Ascending aorta (tissue), 2 donors: ENCODE measurements at regions of chr17 and their contacts with region 1.

Region 1: DNA sequence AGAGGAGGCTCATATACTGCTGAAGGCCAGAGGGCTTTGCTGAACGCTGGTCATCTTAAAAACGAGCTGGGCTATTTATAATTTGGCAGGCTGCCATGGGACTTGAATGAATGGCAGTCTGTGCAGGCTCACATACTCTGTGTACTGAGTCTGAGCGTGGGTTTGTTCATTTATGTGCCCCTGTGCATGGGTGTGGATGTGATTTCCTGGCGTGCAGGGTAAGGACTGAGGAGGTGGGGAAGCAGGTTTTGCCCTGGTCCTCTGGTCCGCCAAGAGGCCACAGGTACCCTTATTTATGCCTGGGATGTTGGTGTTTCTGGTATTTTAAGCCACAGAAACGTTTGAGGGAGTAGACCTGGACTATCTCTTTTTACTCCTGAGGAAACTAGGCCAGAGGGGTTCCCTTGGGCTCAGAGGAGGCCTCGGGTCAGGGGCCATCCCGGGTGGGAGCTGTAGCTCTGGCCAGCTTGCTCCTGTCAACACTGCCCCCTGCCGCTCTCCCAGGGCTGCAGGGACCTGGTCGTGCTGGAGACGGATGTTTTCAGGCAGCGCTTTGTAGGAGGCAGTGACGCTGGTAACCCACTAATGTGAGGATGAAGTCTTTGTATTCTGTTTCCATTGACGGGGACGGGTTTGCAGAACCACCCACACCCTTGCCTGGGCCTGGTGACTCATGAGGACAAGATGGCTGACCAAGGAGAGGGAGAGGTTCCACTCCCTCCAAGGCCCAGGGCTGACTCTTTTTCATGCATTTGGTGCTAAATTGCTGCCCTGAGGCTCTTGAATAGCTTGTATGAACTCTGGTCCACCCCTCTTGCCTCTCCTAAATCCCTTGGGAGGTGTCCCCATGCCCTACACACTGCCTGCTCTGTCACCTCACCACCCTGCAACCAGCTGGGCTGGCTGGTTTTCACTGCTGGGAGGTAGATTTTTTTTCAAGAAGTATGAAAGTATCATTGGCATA is 184.5 kb downstream of the MSI2 start:
- DNase-seq: peak; percentile 34 to 80
- H3K4me3 ChIP-seq: no peak overlapping the region
- H3K27ac ChIP-seq: peak overlapping the region; percentile 44 to 76
- H3K4me1 ChIP-seq: peaks cover 7 to 40% of the 10 kb centered on the region in 2 donors
- H3K27me3 ChIP-seq: no peaks in the 10 kb centered on the region
- CTCF ChIP-seq: peak in 2 of 3 experiments; percentile 6 to 34

Region 2: DNA sequence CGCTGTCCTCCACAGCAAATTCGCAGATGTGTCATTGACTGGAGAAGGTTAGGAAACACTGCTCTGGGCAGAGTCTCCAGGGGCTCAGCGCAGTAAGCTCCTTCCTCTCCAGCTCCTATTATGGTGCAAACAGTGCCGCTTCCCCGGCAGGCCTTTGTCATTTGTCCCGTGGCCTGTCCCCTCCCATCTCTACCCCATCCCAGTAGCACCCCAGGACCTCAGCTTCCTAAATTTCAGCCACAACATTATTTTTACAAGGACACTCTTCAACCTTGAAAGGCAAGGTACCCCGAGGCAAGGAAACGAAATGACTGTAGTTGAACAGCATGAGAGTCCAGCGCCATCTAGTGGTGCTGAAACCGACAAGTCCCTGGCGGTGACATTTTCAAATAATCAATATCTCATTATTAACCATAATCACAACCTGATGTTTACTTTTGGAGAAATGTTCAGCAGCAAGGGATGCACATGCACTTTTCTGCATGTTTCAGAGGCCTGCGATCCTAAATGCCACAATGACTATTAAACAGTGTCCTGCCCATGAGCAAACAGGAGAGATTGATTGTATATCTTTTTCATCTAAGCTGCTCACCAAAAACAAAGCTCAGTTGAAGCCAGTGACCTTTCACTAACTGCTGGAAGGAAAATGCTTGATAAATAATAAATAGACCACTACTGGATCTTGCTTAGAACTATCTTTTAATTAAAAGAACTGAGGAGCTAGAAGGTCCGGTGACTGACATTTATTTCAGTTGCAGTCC is 392.6 kb after region 1 on chr17:
- intact Hi-C with region 1: loop called (anchors 10 kb)
- DNase-seq: peak in 1 of 2 donors; percentile 85
- H3K4me3 ChIP-seq: peak overlapping the region; percentile 51 to 60
- H3K27ac ChIP-seq: peak overlapping the region; percentile 83 to 88
- H3K4me1 ChIP-seq: peaks cover 10 to 19% of the 10 kb centered on the region in 2 donors
- H3K27me3 ChIP-seq: no peaks in the 10 kb centered on the region
- CTCF ChIP-seq: peak; percentile 86 to 93 (median 92)